ENCODE measurements at regions of chr3 and their contacts with region 1.

Region 1: GRCh38 chr3:183490670-183491069 is 62.3 kb upstream of the MCF2L2 start:
- ATAC-seq: peak; percentile 25 to 85 (median 64)
- H3K4me3 ChIP-seq: no peak overlapping the region
- H3K27ac ChIP-seq: no peak overlapping the region
- H3K4me1 ChIP-seq: peaks cover 0 to 6% of the 10 kb centered on the region in 2 donors

Region 2: GRCh38 chr3:183635431-183636220 is 145.0 kb after region 1 on chr3 and contains the start of gene KLHL24:
- in situ Hi-C with region 1: loop called in 1 of 9 experiments (anchors 25 kb)
- ATAC-seq: peak; percentile 66 to 83 (median 74)
- H3K4me3 ChIP-seq: peak within 1 kb of the TSS; percentile 72 to 96 (median 89)
- H3K27ac ChIP-seq: peak within 1 kb of the TSS; percentile 95 to 97
- H3K4me1 ChIP-seq: peaks cover 7 to 11% of the 10 kb centered on the region in 2 donors
- total RNA-seq, gene KLHL24: 56.9 to 220 (median 92.6) TPM

Region 3: GRCh38 chr3:183766745-183767606 is 276.3 kb after region 1 on chr3:
- in situ Hi-C with region 1: loop called in 1 of 9 experiments (anchors 25 kb)
- ATAC-seq: peak; percentile 61 to 97 (median 75)
- H3K4me3 ChIP-seq: no peak overlapping the region
- H3K27ac ChIP-seq: no peak overlapping the region
- H3K4me1 ChIP-seq: no peaks in the 10 kb centered on the region

Measured in motor neuron (in vitro differentiated cells).